ENCODE measurements at regions of chr2 and their contacts with region 1.

Region 1: DNA sequence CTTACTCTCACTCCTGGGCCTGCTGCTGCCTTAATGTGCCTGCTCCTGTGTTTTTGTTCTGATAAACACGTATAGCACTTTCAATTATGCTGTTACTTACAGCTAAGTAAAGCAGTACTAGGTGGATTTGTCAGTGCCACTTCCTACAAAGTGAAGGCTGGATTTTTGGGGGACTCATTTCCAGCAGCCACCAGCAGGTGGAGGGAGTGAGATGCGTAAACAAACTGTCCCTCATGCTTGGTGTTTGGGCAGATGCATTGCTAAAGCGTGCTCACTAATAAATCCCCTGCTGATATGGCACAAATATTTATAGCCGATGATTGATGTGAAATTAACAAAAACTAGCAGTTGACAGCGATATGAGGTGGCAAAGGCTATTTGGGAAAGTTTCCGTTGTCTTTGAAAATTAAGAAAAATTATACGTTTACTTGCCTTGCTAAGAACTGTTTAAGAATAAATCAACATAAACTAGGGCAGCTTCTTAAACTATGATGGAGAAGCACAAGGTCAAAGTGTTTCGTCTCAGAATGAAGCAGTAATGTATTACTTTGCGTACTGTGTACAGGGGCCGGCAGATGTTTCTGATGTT is 101.7 kb downstream of the AGAP1 start:
- DNase-seq: peak; percentile 85
- H3K4me3 ChIP-seq: no peak overlapping the region
- H3K27ac ChIP-seq: no peak overlapping the region
- H3K4me1 ChIP-seq: peaks cover 3% of the 10 kb centered on the region
- H3K27me3 ChIP-seq: no peaks in the 10 kb centered on the region
- CTCF ChIP-seq: peak; percentile 83
- POLR2A ChIP-seq: no peak

Region 2: GRCh38 chr2:235135990-235136561 is 459.4 kb before region 1 on chr2:
- CTCF ChIA-PET with region 1: interaction called, 289 read pairs
- POLR2A ChIA-PET with region 1: no interaction called
- dilution Hi-C with region 1: no loop called
- intact Hi-C with region 1: loop called (anchors 1 kb)
- DNase-seq: peak; percentile 63
- H3K4me3 ChIP-seq: no peak overlapping the region
- H3K27ac ChIP-seq: no peak overlapping the region
- H3K4me1 ChIP-seq: peaks cover 2% of the 10 kb centered on the region
- H3K27me3 ChIP-seq: peaks cover 2 to 6% of the 10 kb centered on the region in 2 experiments
- CTCF ChIP-seq: peak; percentile 66 to 79
- POLR2A ChIP-seq: no peak

Region 3: DNA sequence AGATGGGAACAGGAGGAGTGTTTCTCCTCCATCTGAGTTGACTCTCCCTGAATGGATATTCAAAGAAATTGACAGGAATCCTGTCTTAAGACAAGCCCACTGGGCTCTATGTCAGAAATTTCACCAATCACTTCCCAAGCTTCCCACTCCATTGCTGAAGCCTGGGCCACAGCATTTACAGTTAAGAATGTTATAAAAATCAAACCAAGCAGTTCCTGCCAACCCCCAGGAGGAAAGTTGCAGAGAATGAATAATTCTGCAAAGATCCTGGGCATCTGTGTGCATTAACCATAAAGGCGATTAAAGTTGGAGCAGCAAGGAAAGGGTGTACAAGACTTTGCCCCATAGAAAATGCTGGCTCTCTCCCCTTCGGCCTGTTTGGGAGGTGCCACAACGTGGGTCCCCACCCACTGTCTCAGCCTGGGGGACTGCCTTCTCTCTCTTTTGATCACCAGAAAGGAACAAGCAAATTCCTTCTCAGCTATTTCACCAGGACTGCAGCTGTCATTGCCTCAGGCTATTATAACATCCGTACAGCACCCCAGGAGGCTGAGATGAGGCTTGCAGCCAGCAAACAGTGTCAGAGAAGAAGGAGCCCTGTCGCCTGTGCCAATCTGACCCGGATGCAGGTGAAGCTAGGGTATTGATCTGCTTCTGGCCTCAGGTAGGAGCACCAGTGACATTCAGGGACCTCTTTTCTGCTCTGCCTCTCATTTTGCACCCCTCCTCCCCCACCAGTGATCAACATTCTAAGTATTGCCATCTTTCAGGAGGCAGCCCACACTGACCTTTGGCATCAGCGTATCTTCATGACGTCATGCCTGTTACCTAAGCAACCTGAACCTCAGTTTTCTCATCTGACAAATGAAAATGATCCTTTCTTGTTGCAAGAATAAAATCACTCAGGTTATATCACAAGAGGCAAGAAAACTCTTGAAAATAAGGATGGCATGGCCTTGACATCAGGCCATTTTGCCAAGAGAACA is 424.7 kb before region 1 on chr2:
- CTCF ChIA-PET with region 1: no interaction called
- POLR2A ChIA-PET with region 1: no interaction called
- dilution Hi-C with region 1: no loop called
- intact Hi-C with region 1: no loop called
- DNase-seq: no peak
- H3K4me3 ChIP-seq: no peak overlapping the region
- H3K27ac ChIP-seq: no peak overlapping the region
- H3K4me1 ChIP-seq: no peaks in the 10 kb centered on the region
- H3K27me3 ChIP-seq: no peaks in the 10 kb centered on the region
- CTCF ChIP-seq: no peak
- POLR2A ChIP-seq: no peak

Region 4: DNA sequence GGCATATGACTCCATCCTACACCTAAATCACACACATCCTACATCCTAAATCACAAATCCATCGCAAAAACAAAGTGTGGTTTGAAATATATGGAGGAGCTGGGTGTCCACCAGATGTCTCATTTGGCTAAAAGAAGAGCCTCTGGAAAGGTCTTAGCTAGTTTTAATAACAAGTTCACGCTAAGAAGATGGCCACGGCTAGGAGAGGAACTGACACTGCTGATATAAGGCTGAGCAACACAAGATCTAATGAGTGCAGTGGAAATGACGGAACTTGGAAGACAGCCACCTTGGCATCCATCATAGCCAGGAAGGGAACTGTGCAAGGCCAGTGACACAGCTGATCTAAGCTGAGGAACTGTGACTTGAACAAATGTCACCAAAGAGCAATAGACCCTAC is 161.7 kb before region 1 on chr2:
- CTCF ChIA-PET with region 1: interaction called, 9 read pairs
- POLR2A ChIA-PET with region 1: no interaction called
- dilution Hi-C with region 1: no loop called
- intact Hi-C with region 1: loop called (anchors 2 kb)
- DNase-seq: peak; percentile 39
- H3K4me3 ChIP-seq: no peak overlapping the region
- H3K27ac ChIP-seq: no peak overlapping the region
- H3K4me1 ChIP-seq: no peaks in the 10 kb centered on the region
- H3K27me3 ChIP-seq: no peaks in the 10 kb centered on the region
- CTCF ChIP-seq: no peak
- POLR2A ChIP-seq: no peak

Region 5: GRCh38 chr2:235493775-235494715 is 101.5 kb before region 1 on chr2 and contains the start of gene AGAP1:
- CTCF ChIA-PET with region 1: interaction called, 9 read pairs
- POLR2A ChIA-PET with region 1: no interaction called
- dilution Hi-C with region 1: no loop called
- intact Hi-C with region 1: loop called (anchors 1 kb)
- DNase-seq: peak; percentile 83
- H3K4me3 ChIP-seq: peak within 1 kb of the TSS; percentile 43 to 56 (median 47)
- H3K27ac ChIP-seq: peak within 1 kb of the TSS; percentile 38
- H3K4me1 ChIP-seq: peaks cover 11% of the 10 kb centered on the region
- H3K27me3 ChIP-seq: no peaks in the 10 kb centered on the region
- CTCF ChIP-seq: no peak
- POLR2A ChIP-seq: peak; percentile 52
- total RNA-seq, gene AGAP1: 19.5 and 20.9 TPM in 2 replicates

Region 6: GRCh38 chr2:235551965-235552364 is 43.6 kb before region 1 on chr2:
- CTCF ChIA-PET with region 1: interaction called, 11 read pairs
- POLR2A ChIA-PET with region 1: no interaction called
- dilution Hi-C with region 1: no loop called
- intact Hi-C with region 1: loop called (anchors 2 kb)
- DNase-seq: peak; percentile 81
- H3K4me3 ChIP-seq: no peak overlapping the region
- H3K27ac ChIP-seq: no peak overlapping the region
- H3K4me1 ChIP-seq: no peaks in the 10 kb centered on the region
- H3K27me3 ChIP-seq: no peaks in the 10 kb centered on the region
- CTCF ChIP-seq: peak; percentile 59 to 86
- POLR2A ChIP-seq: no peak

Region 7: DNA sequence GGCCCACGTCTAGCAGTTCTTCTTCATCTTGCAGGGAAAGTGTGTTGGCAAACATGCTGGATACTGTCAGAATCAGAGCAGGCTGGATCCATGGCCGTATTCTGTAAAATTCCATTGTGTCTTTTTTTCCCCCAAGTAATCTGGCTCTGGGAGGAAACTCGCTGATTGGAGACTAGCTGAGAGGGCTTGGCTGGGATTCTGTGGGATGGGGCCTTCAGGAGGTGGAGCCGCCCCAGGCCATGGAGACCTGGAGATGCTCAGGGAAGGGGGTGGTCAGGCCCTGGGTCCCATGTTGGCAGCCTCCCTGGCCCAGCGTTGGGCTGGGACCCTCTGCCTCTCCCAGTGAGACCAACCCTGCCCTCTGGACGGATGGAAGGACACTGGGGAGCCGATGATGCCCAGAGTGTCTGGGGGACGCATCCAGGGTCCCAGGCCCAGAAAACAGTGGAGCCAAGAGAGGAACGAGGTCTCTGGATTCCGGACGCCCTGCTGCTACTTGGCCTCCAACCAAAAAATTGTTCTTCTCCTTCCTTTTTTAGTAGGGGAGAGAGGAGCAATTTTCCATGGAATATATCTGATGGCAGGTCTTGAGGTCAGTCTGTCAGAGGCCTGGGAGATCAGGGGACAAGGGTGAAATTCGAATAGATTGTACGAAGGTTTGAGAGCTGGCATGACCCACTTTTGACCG is 12.8 kb after region 1 on chr2:
- CTCF ChIA-PET with region 1: interaction called, 14 read pairs
- POLR2A ChIA-PET with region 1: no interaction called
- dilution Hi-C with region 1: no loop called
- intact Hi-C with region 1: no loop called
- DNase-seq: no peak
- H3K4me3 ChIP-seq: no peak overlapping the region
- H3K27ac ChIP-seq: no peak overlapping the region
- H3K4me1 ChIP-seq: no peaks in the 10 kb centered on the region
- H3K27me3 ChIP-seq: no peaks in the 10 kb centered on the region
- CTCF ChIP-seq: no peak
- POLR2A ChIP-seq: no peak

Region 8: GRCh38 chr2:235746257-235747084 is 151.0 kb after region 1 on chr2:
- CTCF ChIA-PET with region 1: interaction called, 213 read pairs
- POLR2A ChIA-PET with region 1: interaction called, 6 read pairs
- dilution Hi-C with region 1: no loop called
- intact Hi-C with region 1: loop called (anchors 1 kb)
- DNase-seq: peak; percentile 77
- H3K4me3 ChIP-seq: no peak overlapping the region
- H3K27ac ChIP-seq: no peak overlapping the region
- H3K4me1 ChIP-seq: no peaks in the 10 kb centered on the region
- H3K27me3 ChIP-seq: no peaks in the 10 kb centered on the region
- CTCF ChIP-seq: peak; percentile 80 to 82
- POLR2A ChIP-seq: no peak

Measured in endothelial cell of umbilical vein (primary cell).